Left ventricle myocardium superior (tissue), 1 donor: ENCODE measurements at regions of chrX and their contacts with region 1.

Region 1: GRCh38 chrX:40085102-40085551 is 12.6 kb downstream of the BCOR start:
- DNase-seq: peak; percentile 57
- ATAC-seq: peak; percentile 25

Region 2: GRCh38 chrX:40169193-40170101 is 84.3 kb after region 1 on chrX:
- intact Hi-C with region 1: loop called (anchors 5 kb)
- DNase-seq: peak; percentile 55
- ATAC-seq: no peak